ENCODE measurements at regions of chr12 and their contacts with region 1.

Region 1: DNA sequence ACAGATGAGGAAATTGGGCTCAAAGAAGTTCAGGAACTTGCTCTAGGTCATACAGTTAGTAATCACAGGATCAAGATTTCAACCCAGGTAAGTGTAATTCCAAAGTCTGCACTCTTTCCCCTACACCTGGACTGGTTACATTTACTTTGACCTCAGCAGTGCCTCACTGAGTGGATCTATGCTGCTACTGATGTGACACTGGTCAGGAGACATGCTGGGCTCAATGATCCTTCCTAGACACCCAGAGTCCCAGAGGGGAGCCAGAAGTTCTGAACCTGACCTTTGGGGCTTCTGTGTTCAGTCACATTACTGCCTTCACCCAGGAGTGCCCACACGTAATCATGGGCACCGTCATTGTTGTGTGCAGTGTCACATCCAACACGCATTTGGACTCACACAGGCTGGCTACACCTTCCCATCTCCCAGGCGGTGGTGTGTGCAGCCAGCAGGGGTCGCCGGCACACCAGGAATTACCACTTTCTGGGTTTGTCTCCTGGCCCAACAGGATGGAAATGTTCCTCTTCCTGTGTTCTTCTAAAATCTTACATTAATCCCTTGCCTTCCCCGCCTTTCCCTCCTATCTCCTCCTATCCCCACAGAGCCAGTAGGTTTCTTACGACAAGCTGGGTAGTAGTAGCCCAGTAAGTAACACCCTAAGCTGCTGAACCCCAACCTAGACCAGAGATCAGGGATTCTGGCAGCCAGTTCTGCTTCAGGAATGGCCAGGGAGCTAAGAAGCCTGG is 25.6 kb downstream of the CALCOCO1 start:
- DNase-seq: peak; percentile 48 to 74 (median 70)
- ATAC-seq: peak; percentile 92
- H3K4me3 ChIP-seq: no peak overlapping the region
- H3K4me3 Mint-ChIP-seq: no peak overlapping the region
- H3K27ac ChIP-seq: no peak overlapping the region
- H3K27ac Mint-ChIP-seq: no peak overlapping the region
- H3K4me1 ChIP-seq: peaks cover 0 to 4% of the 10 kb centered on the region in 2 donors
- H3K4me1 Mint-ChIP-seq: peaks cover 5 to 10% (median 7%) of the 10 kb centered on the region in 7 donors
- H3K27me3 ChIP-seq: peaks cover 11 to 12% of the 10 kb centered on the region in 2 donors
- H3K27me3 Mint-ChIP-seq: peaks cover 76 to 90% (median 82%) of the 10 kb centered on the region in 5 donors

Region 2: DNA sequence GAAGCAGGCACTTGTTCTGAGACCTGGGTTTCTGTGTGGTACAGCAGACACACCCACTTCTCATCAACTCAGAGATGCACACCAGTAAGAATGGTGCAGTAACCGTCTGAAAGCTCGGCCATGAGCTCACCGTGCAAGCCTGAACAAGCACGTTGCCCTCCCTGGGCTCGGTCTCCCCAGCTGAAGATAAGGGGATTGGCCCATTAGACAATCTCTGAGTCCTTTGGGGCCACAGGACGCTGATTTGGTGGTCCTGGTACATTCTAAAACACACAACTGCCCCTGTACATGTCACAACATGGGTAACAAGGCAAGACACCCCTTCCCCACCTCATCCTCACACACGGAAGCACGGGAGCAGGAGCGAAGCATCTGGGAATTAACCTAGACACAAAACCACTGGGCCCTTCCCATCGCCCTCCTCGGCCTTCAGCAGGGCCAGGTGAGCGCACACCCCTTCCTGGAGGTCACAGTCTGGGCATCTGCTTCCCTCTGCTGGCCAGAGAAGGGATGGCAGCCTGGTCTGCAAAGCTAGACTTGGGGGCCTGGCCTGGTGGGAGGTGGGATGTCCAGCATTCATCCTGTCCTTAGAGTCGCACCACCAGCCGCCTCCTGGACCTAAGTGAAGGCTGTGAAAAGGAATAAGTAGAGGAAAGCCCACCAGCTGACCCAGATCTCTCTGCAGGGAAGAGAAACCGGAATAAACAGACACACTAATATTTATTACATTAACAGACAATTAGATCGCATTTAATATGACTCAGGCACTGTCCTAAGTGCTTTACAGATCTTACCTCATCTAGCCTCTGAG is 506.0 kb after region 1 on chr12:
- CTCF ChIA-PET with region 1: no interaction called
- POLR2A ChIA-PET with region 1: no interaction called
- intact Hi-C with region 1: loop called in 1 of 2 experiments (anchors 5 kb)
- DNase-seq: peak; percentile 50 to 80 (median 59)
- ATAC-seq: peak; percentile 92
- H3K4me3 ChIP-seq: no peak overlapping the region
- H3K4me3 Mint-ChIP-seq: no peak overlapping the region
- H3K27ac ChIP-seq: no peak overlapping the region
- H3K27ac Mint-ChIP-seq: peak overlapping the region in 1 of 9 donors; percentile 54
- H3K4me1 ChIP-seq: no peaks in the 10 kb centered on the region
- H3K4me1 Mint-ChIP-seq: peaks cover 0 to 6% (median 2%) of the 10 kb centered on the region in 7 donors
- H3K27me3 ChIP-seq: no peaks in the 10 kb centered on the region
- H3K27me3 Mint-ChIP-seq: peaks cover 26 to 61% (median 36%) of the 10 kb centered on the region in 5 donors

Region 3: GRCh38 chr12:55296469-55296868 is 1594.8 kb after region 1 on chr12 and contains the start of gene OR6C6:
- CTCF ChIA-PET with region 1: no interaction called
- POLR2A ChIA-PET with region 1: no interaction called
- intact Hi-C with region 1: no loop called
- DNase-seq: no peak
- ATAC-seq: no peak
- H3K4me3 ChIP-seq: no peak within 1 kb of the TSS
- H3K4me3 Mint-ChIP-seq: no peak within 1 kb of the TSS
- H3K27ac ChIP-seq: no peak within 1 kb of the TSS
- H3K27ac Mint-ChIP-seq: no peak within 1 kb of the TSS
- H3K4me1 ChIP-seq: no peaks in the 10 kb centered on the region
- H3K4me1 Mint-ChIP-seq: no peaks in the 10 kb centered on the region
- H3K27me3 ChIP-seq: peaks cover 0 to 4% of the 10 kb centered on the region in 2 donors
- H3K27me3 Mint-ChIP-seq: peaks cover 3 to 48% (median 37%) of the 10 kb centered on the region in 5 donors
- total RNA-seq, gene OR6C6: not detected

Measured in naive thymus-derived CD4-positive, alpha-beta T cell (primary cell).